ENCODE measurements at regions of chr10 and their contacts with region 1.

Region 1: DNA sequence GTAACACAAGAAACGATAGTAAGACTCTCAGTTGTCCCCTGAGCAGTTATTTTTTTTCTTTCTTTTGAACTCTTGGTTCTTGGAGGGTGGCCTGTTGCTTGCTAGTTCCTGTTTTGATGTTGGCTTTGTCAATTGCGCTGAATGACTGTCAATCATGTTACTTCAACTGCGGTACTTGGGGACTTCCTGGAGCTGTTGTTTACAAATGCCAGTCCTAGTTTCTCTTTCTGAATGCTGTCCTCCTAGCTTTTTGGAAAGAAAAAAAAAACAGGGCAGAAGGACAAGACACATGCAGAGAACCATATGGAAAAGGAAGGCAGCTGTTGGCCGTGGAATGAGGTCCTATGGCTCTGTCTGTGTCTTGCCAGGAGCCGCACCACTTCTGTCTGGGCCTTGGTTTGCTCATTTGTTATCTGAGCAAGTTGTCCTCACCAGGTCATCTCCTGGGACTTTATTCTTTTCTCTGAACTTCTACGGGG is 7.0 kb upstream of the PDCD4 start:
- DNase-seq: no peak
- ATAC-seq: peak in 2 of 4 donors; percentile 22 to 46
- H3K4me3 ChIP-seq: peak overlapping the region in 7 of 12 donors; percentile 1 to 42 (median 16)
- H3K27ac ChIP-seq: peak overlapping the region; percentile 40 to 99 (median 66)
- H3K4me1 ChIP-seq: peaks cover 0 to 99% (median 16%) of the 10 kb centered on the region in 12 donors
- H3K27me3 ChIP-seq: no peaks in the 10 kb centered on the region
- CTCF ChIP-seq: no peak
- POLR2A ChIP-seq: no peak

Region 2: DNA sequence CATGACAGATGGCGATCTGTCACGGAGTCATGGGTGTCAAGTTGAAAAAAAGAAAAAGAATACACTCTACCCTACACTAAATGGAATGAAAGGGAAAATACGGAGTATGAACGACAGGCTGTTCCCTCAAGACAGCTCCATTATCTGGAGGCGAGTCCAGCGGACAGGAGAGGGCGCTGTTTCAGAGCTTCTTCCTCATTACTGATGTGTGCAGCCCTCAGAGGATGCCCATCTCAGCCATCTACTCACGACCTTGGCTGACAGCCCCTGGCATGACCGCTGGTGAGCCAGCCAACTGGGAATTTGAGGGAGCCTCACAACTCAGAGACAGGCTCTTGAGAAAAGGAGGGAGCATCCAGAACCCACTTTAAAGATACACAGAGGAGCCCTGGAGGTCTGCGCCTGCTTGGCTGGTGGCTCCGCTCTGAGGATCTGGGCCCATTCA is 510.4 kb before region 1 on chr10:
- intact Hi-C with region 1: no loop called
- DNase-seq: peak; percentile 76 to 85 (median 78)
- ATAC-seq: peak; percentile 62 to 91 (median 82)
- H3K4me3 ChIP-seq: no peak overlapping the region
- H3K27ac ChIP-seq: no peak overlapping the region
- H3K4me1 ChIP-seq: peaks cover 0 to 45% (median 8%) of the 10 kb centered on the region in 12 donors
- H3K27me3 ChIP-seq: peaks cover 0 to 3% (median 0%) of the 10 kb centered on the region in 9 donors
- CTCF ChIP-seq: peak; percentile 54 to 85 (median 73)
- POLR2A ChIP-seq: no peak

Region 3: GRCh38 chr10:110783509-110784107 is 81.1 kb before region 1 on chr10:
- intact Hi-C with region 1: no loop called
- DNase-seq: no peak
- ATAC-seq: no peak
- H3K4me3 ChIP-seq: no peak overlapping the region
- H3K27ac ChIP-seq: peak overlapping the region in 10 of 12 donors; percentile 3 to 80 (median 58)
- H3K4me1 ChIP-seq: peaks cover 3 to 93% (median 30%) of the 10 kb centered on the region in 12 donors
- H3K27me3 ChIP-seq: no peaks in the 10 kb centered on the region
- CTCF ChIP-seq: no peak
- POLR2A ChIP-seq: no peak

Region 4: GRCh38 chr10:110803830-110804338 is 60.8 kb before region 1 on chr10:
- intact Hi-C with region 1: loop called in 1 of 10 experiments (anchors 10 kb)
- DNase-seq: peak in 2 of 5 donors; percentile 53 to 55
- ATAC-seq: peak; percentile 44 to 66 (median 58)
- H3K4me3 ChIP-seq: no peak overlapping the region
- H3K27ac ChIP-seq: peak overlapping the region in 8 of 12 donors; percentile 14 to 68 (median 31)
- H3K4me1 ChIP-seq: peaks cover 0 to 42% (median 26%) of the 10 kb centered on the region in 12 donors
- H3K27me3 ChIP-seq: no peaks in the 10 kb centered on the region
- CTCF ChIP-seq: peak; percentile 36 to 74 (median 55)
- POLR2A ChIP-seq: no peak

Region 5: DNA sequence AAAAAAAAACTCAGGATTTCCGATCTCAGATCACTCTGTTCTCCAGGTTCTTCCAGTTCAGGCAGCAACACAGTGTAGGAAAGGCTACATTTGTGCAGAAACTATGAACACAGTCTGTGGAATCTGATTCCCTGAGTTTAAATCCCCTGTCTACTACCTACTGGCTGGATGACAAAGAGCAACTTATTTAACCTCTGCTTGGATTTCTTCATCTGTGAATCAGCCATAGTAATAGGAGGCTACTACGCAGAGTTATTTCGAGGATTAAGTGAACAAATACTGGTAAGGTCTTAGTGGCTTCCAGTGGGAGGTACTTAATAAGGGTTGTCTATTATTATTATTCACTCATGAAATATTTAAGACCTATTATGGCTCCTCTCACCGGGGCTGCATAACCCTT is 37.3 kb before region 1 on chr10:
- intact Hi-C with region 1: loop called in 1 of 10 experiments (anchors 5 kb)
- DNase-seq: no peak
- ATAC-seq: no peak
- H3K4me3 ChIP-seq: no peak overlapping the region
- H3K27ac ChIP-seq: peak overlapping the region in 7 of 12 donors; percentile 7 to 85 (median 32)
- H3K4me1 ChIP-seq: peaks cover 0 to 62% (median 14%) of the 10 kb centered on the region in 12 donors
- H3K27me3 ChIP-seq: no peaks in the 10 kb centered on the region
- CTCF ChIP-seq: no peak
- POLR2A ChIP-seq: no peak

Region 6: DNA sequence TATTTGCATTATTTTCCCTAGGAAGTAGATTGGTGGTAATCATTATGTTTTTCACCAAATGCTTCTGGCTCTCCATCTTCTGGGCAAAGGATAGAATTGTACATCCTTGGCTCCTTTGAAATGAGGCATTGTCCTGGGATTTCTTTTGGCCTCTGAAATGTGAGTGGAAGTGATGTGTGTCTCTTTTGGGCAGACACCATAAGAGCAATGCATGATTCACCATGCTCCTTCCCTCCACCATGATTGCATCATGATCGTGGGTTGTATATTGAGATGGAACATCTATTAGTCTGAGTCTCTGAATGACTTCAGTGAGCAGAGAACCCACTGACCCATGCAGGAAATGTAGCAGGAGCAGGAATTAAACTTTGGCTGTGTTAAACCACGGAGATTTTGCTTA is 261.4 kb after region 1 on chr10:
- intact Hi-C with region 1: no loop called
- DNase-seq: no peak
- ATAC-seq: no peak
- H3K4me3 ChIP-seq: no peak overlapping the region
- H3K27ac ChIP-seq: no peak overlapping the region
- H3K4me1 ChIP-seq: no peaks in the 10 kb centered on the region
- H3K27me3 ChIP-seq: peaks cover 0 to 20% (median 0%) of the 10 kb centered on the region in 9 donors
- CTCF ChIP-seq: no peak
- POLR2A ChIP-seq: no peak

Measured in heart left ventricle (tissue), 16 donors.